ENCODE measurements at regions of chr5 and their contacts with region 1.

Region 1: GRCh38 chr5:161625673-161626072 is 59.8 kb upstream of the GABRA6 start:
- DNase-seq: no peak
- ATAC-seq: no peak

Region 2: GRCh38 chr5:159786901-159787691 is 1838.6 kb before region 1 on chr5:
- intact Hi-C with region 1: no loop called
- DNase-seq: no peak
- ATAC-seq: peak; percentile 94

Region 3: DNA sequence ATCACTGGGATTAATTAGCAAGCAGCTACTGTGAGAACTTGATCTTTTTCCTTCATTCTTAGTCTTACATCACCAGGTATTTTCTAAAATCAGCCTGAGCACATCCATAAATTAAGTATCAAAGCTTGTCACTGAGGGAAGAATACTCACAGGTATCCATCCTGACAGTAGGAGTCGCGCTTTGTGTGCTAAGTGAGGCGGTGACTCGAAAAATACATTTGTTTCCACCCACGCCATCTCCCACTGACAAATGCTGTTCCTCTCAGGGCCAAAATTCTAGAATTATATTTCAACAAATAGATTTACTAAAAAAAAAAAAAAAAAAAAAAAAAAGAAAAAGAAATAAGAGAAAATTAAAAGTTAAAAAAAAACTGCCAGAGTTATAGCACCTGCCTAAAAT is 45.1 kb before region 1 on chr5:
- intact Hi-C with region 1: loop called (anchors 5 kb)
- DNase-seq: no peak
- ATAC-seq: no peak

Region 4: DNA sequence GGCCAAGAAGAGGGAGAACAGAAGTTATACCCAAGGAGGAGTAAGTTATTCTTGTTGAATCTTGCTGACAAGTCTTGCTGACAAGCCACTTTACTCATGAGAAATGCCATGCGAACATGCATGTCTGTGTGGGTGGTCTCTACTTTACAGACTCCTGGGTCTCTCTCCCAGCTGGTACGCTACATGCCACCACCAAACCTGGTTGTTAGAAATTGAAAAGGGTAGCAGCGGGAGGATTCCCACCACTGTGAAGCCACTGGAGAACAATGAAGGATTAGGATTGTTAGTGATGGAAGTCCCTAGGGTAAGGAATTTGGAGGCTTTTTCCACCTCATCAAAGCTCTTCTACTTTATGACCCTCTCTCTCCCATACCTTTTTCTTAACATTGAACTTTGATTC is 25.5 kb before region 1 on chr5:
- intact Hi-C with region 1: no loop called
- DNase-seq: no peak
- ATAC-seq: no peak

Region 5: GRCh38 chr5:162193012-162193411 is 567.3 kb after region 1 on chr5:
- intact Hi-C with region 1: no loop called
- DNase-seq: no peak
- ATAC-seq: no peak